Caco-2 (cell line): ENCODE measurements at regions of chr1 and their contacts with region 1.

Region 1: GRCh38 chr1:216750012-216750627 is 26.9 kb upstream of the ESRRG start:
- DNase-seq: peak; percentile 51 to 53
- H3K4me3 ChIP-seq: no peak overlapping the region
- H3K4me3 Mint-ChIP-seq: no peak overlapping the region
- H3K27ac Mint-ChIP-seq: no peak overlapping the region
- H3K4me1 ChIP-seq: no peaks in the 10 kb centered on the region
- H3K4me1 Mint-ChIP-seq: no peaks in the 10 kb centered on the region
- H3K27me3 ChIP-seq: no peaks in the 10 kb centered on the region
- H3K27me3 Mint-ChIP-seq: no peaks in the 10 kb centered on the region
- CTCF ChIP-seq: peak; percentile 64 to 79

Region 2: GRCh38 chr1:216904471-216904870 is 154.4 kb after region 1 on chr1:
- CTCF ChIA-PET with region 1: no interaction called
- POLR2A ChIA-PET with region 1: no interaction called
- intact Hi-C with region 1: loop called (anchors 2 kb)
- DNase-seq: peak; percentile 28 to 38
- H3K4me3 ChIP-seq: peak overlapping the region; percentile 29
- H3K4me3 Mint-ChIP-seq: peak overlapping the region; percentile 66
- H3K27ac Mint-ChIP-seq: peak overlapping the region; percentile 45
- H3K4me1 ChIP-seq: peaks cover 37% of the 10 kb centered on the region
- H3K4me1 Mint-ChIP-seq: peaks cover 32% of the 10 kb centered on the region
- H3K27me3 ChIP-seq: no peaks in the 10 kb centered on the region
- H3K27me3 Mint-ChIP-seq: no peaks in the 10 kb centered on the region
- CTCF ChIP-seq: no peak

Region 3: GRCh38 chr1:217134857-217135568 is 384.9 kb after region 1 on chr1:
- CTCF ChIA-PET with region 1: no interaction called
- POLR2A ChIA-PET with region 1: no interaction called
- intact Hi-C with region 1: loop called (anchors 5 kb)
- DNase-seq: peak; percentile 38 to 41
- H3K4me3 ChIP-seq: peak overlapping the region; percentile 52
- H3K4me3 Mint-ChIP-seq: peak overlapping the region; percentile 85
- H3K27ac Mint-ChIP-seq: peak overlapping the region; percentile 34
- H3K4me1 ChIP-seq: no peaks in the 10 kb centered on the region
- H3K4me1 Mint-ChIP-seq: peaks cover 13% of the 10 kb centered on the region
- H3K27me3 ChIP-seq: no peaks in the 10 kb centered on the region; the same call in 1 of the 2 replicates
- H3K27me3 Mint-ChIP-seq: peaks cover 10% of the 10 kb centered on the region
- CTCF ChIP-seq: no peak

Region 4: DNA sequence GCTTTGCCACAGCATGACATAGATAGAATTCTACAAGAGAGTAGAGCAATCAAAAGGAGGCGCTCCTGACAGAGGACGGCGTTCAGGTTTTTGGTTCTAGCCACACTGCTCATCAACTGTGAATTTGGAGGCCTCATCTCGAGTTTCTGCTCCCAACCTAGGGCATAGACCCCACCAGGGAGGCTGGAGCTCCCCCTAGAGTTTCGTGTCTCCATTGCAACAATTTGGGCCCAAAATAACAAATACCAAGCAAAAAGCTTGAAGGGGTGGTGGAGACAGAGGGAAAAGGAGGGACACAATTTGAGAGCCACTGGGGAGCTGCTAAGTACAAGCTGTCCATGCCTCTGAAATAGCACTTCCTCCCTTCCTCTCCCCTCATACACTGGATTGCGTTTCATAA is 583.8 kb after region 1 on chr1:
- CTCF ChIA-PET with region 1: no interaction called
- POLR2A ChIA-PET with region 1: no interaction called
- intact Hi-C with region 1: loop called (anchors 1 kb)
- DNase-seq: peak; percentile 36 to 43
- H3K4me3 ChIP-seq: no peak overlapping the region
- H3K4me3 Mint-ChIP-seq: no peak overlapping the region
- H3K27ac Mint-ChIP-seq: no peak overlapping the region
- H3K4me1 ChIP-seq: no peaks in the 10 kb centered on the region
- H3K4me1 Mint-ChIP-seq: peaks cover under 1% of the 10 kb centered on the region
- H3K27me3 ChIP-seq: 0 out of 2 replicates have a peak, but pooled peaks cover 1% of the 10 kb centered on the region
- H3K27me3 Mint-ChIP-seq: no peaks in the 10 kb centered on the region
- CTCF ChIP-seq: peak; percentile 42 to 62

Region 5: DNA sequence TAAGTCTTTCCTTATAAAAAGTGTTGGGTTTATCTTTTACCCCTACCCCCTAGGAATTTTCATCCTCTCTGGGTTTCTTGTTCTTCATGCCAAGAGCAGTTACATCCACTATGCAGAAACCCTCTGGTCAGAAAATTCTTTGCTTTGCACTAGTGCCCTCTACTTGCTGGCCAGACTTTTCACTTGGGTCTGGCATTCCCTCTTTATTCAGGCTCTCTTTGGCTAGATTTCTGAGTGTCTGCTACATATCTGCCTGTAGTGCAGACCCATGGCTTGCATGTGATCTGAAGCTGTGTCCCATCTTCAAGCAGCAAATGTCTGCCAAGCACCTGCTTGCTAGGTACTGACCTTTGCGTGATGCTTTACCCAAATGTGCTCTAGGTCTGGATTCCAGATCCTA is 643.8 kb after region 1 on chr1:
- CTCF ChIA-PET with region 1: no interaction called
- POLR2A ChIA-PET with region 1: no interaction called
- intact Hi-C with region 1: loop called (anchors 5 kb)
- DNase-seq: peak in 1 of 2 experiments; percentile 7
- H3K4me3 ChIP-seq: no peak overlapping the region
- H3K4me3 Mint-ChIP-seq: no peak overlapping the region
- H3K27ac Mint-ChIP-seq: no peak overlapping the region
- H3K4me1 ChIP-seq: no peaks in the 10 kb centered on the region
- H3K4me1 Mint-ChIP-seq: no peaks in the 10 kb centered on the region
- H3K27me3 ChIP-seq: no peaks in the 10 kb centered on the region; the same call in 1 of the 2 replicates
- H3K27me3 Mint-ChIP-seq: peaks cover 3% of the 10 kb centered on the region
- CTCF ChIP-seq: peak; percentile 14 to 44

Region 6: GRCh38 chr1:217747156-217747769 is 997.1 kb after region 1 on chr1:
- CTCF ChIA-PET with region 1: no interaction called
- POLR2A ChIA-PET with region 1: no interaction called
- intact Hi-C with region 1: loop called (anchors 10 kb)
- DNase-seq: no peak
- H3K4me3 ChIP-seq: no peak overlapping the region
- H3K4me3 Mint-ChIP-seq: no peak overlapping the region
- H3K27ac Mint-ChIP-seq: no peak overlapping the region
- H3K4me1 ChIP-seq: no peaks in the 10 kb centered on the region
- H3K4me1 Mint-ChIP-seq: no peaks in the 10 kb centered on the region
- H3K27me3 ChIP-seq: no peaks in the 10 kb centered on the region
- H3K27me3 Mint-ChIP-seq: no peaks in the 10 kb centered on the region
- CTCF ChIP-seq: peak; percentile 71 to 77

Region 7: GRCh38 chr1:218171285-218171893 is 1421.3 kb after region 1 on chr1:
- CTCF ChIA-PET with region 1: no interaction called
- POLR2A ChIA-PET with region 1: no interaction called
- intact Hi-C with region 1: loop called (anchors 1 kb)
- DNase-seq: peak in 1 of 2 experiments; percentile 17
- H3K4me3 ChIP-seq: no peak overlapping the region
- H3K4me3 Mint-ChIP-seq: no peak overlapping the region
- H3K27ac Mint-ChIP-seq: no peak overlapping the region
- H3K4me1 ChIP-seq: no peaks in the 10 kb centered on the region
- H3K4me1 Mint-ChIP-seq: no peaks in the 10 kb centered on the region
- H3K27me3 ChIP-seq: no peaks in the 10 kb centered on the region; the same call in 1 of the 2 replicates
- H3K27me3 Mint-ChIP-seq: peaks cover 15% of the 10 kb centered on the region
- CTCF ChIP-seq: peak; percentile 74